Sciatic nerve (tissue), 2 donors: ENCODE measurements at regions of chr5 and their contacts with region 1.

Region 1: GRCh38 chr5:150357326-150358260 is at the start of gene TCOF1:
- DNase-seq: peak; percentile 98
- ATAC-seq: peak; percentile 99
- total RNA-seq, gene TCOF1: 30.0 TPM

Region 2: DNA sequence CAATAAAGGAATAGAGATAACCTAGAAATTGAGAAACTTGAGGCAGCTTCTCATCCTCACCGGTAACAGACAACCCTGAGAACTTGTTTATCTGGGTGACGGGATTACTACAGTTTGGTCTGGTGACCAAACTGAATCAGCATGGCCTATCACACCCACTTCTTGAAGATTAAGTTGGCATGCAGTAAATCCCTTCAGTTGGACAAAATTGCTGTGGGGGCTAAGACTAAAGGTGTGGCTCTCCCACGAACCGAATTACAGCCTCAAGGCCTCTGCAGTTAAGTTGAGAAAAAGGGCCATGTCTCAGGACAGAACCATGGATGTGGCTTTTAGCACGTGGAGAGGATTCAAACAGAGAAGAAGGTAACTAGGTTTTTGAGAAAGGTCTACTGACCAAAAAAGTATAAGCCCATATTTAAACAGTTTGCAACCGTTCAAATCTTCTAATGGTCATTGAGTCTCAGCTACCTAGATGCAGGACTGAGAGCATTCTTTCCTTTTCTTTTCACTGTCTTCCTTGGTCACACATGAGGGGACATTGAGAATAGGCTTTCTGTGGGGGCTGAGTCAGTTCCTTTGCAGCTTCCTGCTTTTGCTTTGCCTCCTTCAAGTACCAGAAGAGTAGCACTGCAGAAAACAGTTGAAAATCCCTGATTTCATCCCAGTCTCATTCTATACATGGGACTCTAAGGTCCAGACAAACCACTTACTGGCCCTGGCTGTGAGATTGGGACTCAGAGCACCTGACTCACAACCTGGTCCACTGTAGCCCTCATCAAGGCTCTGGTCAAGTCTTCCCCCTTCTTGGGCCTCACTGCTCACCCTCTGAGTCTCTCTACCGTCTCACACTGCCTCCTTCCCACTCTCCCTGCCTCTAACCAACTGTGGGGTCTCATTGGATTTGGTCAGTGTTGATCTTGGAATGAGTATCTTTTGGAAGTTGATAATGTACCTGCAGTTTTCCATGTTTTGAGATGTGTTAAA is 443.9 kb before region 1 on chr5:
- intact Hi-C with region 1: no loop called
- DNase-seq: no peak
- ATAC-seq: no peak

Region 3: GRCh38 chr5:150129813-150130492 is 227.6 kb before region 1 on chr5:
- intact Hi-C with region 1: loop called (anchors 10 kb)
- DNase-seq: peak; percentile 88
- ATAC-seq: peak; percentile 84

Region 4: DNA sequence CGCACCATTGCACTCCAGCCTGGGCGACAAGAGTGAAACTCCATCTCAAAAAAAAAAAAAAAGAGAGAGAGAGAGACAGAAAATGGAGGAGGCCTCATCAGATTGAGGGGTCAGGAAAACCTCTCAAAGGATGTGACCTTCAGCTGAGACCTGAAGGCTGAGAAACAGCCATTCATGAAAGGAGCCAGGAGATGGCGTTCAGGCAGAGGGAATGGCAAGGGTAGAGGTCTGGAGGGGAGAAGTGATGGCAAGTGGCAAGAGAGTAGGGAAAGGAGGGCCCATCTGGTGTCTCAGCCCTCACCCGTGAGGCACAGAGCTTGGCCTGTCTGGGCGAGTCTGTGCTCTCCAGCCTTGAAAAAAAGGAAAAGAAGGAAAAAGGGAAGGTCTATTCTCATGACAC is 85.1 kb before region 1 on chr5:
- intact Hi-C with region 1: loop called (anchors 10 kb)
- DNase-seq: no peak
- ATAC-seq: no peak

Region 5: GRCh38 chr5:150394131-150394530 is 36.5 kb after region 1 on chr5:
- intact Hi-C with region 1: no loop called
- DNase-seq: no peak
- ATAC-seq: no peak